ENCODE measurements at regions of chr1 and their contacts with region 1.

Region 1: GRCh38 chr1:51519048-51519864 is at the start of gene EPS15:
- DNase-seq: peak; percentile 80
- ATAC-seq: peak; percentile 75
- H3K4me3 ChIP-seq: peak within 1 kb of the TSS; percentile 85
- H3K27ac ChIP-seq: peak within 1 kb of the TSS; percentile 58
- H3K4me1 ChIP-seq: peaks cover 44% of the 10 kb centered on the region
- H3K27me3 ChIP-seq: no peaks in the 10 kb centered on the region
- CTCF ChIP-seq: no peak
- total RNA-seq, gene EPS15: 24.4 and 26.3 TPM in 2 replicates

Region 2: GRCh38 chr1:51444096-51444495 is 75.2 kb before region 1 on chr1:
- CTCF ChIA-PET with region 1: no interaction called
- POLR2A ChIA-PET with region 1: no interaction called
- intact Hi-C with region 1: loop called (anchors 5 kb)
- DNase-seq: no peak
- ATAC-seq: peak; percentile 48
- H3K4me3 ChIP-seq: no peak overlapping the region
- H3K27ac ChIP-seq: no peak overlapping the region
- H3K4me1 ChIP-seq: no peaks in the 10 kb centered on the region
- H3K27me3 ChIP-seq: no peaks in the 10 kb centered on the region
- CTCF ChIP-seq: no peak

Region 3: GRCh38 chr1:51535006-51535592 is 15.8 kb after region 1 on chr1:
- CTCF ChIA-PET with region 1: no interaction called
- POLR2A ChIA-PET with region 1: no interaction called
- intact Hi-C with region 1: loop called (anchors 2 kb)
- DNase-seq: peak; percentile 81
- ATAC-seq: peak; percentile 66
- H3K4me3 ChIP-seq: no peak overlapping the region
- H3K27ac ChIP-seq: no peak overlapping the region
- H3K4me1 ChIP-seq: peaks cover 16% of the 10 kb centered on the region
- H3K27me3 ChIP-seq: no peaks in the 10 kb centered on the region
- CTCF ChIP-seq: peak; percentile 90

Region 4: GRCh38 chr1:51569284-51570062 is 50.2 kb after region 1 on chr1:
- CTCF ChIA-PET with region 1: no interaction called
- POLR2A ChIA-PET with region 1: interaction called, 4 read pairs
- intact Hi-C with region 1: loop called (anchors 2 kb)
- DNase-seq: peak; percentile 98
- ATAC-seq: peak; percentile 69
- H3K4me3 ChIP-seq: peak overlapping the region; percentile 37
- H3K27ac ChIP-seq: peak overlapping the region; percentile 97
- H3K4me1 ChIP-seq: peaks cover 58% of the 10 kb centered on the region
- H3K27me3 ChIP-seq: no peaks in the 10 kb centered on the region
- CTCF ChIP-seq: peak; percentile 63

Region 5: GRCh38 chr1:52127181-52128180 is 608.2 kb after region 1 on chr1:
- CTCF ChIA-PET with region 1: no interaction called
- POLR2A ChIA-PET with region 1: no interaction called
- intact Hi-C with region 1: no loop called
- DNase-seq: peak; percentile 71
- ATAC-seq: peak; percentile 99
- H3K4me3 ChIP-seq: no peak overlapping the region
- H3K27ac ChIP-seq: no peak overlapping the region
- H3K4me1 ChIP-seq: no peaks in the 10 kb centered on the region
- H3K27me3 ChIP-seq: peaks cover 4% of the 10 kb centered on the region; the same call in 1 of the 2 replicates
- CTCF ChIP-seq: peak; percentile 86

Measured in PC-3 (cell line).